GM10248 (cell line): ENCODE measurements at regions of chr2 and their contacts with region 1.

Region 1: DNA sequence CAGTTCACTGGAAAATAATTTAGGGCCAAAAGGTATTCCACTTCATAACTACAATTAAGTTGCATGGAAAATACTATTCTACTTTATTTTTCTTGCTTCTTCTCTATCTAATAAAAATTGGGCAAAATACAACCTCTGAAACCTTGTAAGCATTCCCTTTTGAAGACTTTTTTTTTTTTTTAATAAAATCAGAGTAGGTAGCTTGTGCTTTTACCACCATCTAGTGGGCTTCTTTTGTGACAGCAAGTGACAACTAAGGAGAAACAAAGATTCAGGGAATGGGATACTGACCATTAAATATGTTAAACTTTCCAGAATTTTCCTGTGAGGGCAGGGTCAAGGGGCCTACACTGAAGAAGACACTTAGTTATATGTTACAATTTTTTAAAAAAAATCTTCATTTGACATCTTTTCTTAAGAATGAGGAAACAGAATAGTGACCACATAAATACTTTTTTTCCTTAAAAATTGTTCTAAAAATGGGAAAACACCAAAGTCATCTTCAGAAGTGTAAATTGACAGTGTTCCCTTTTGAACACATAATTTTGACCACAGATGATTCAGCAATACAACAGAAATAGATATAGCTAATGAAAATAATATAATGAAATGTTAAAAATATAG is 1183.2 kb upstream of the ACVR2A start:
- DNase-seq: no peak
- CTCF ChIP-seq: peak; percentile 25

Region 2: DNA sequence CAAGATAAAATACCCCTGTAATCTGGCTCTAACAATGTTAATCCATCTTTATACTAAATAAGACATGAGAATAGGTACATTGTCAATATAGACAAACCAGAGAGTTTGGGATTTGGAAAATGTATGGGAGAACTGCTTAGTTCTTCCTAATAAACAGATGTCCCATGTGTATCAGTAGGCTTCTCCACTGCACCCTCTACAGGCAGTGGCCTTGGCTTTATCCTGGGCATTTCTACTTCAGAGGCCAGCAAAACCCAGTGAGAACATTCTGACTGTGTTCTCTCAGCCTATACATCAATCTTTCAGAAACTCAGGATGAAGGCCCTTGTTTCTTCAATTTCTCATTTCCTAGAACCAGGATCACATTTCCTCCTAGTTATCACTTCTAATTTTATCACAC is 15.7 kb after region 1 on chr2:
- CTCF ChIA-PET with region 1: interaction called, 16 read pairs
- POLR2A ChIA-PET with region 1: no interaction called
- DNase-seq: no peak
- CTCF ChIP-seq: no peak